ENCODE measurements at regions of chrX and their contacts with region 1.

Region 1: DNA sequence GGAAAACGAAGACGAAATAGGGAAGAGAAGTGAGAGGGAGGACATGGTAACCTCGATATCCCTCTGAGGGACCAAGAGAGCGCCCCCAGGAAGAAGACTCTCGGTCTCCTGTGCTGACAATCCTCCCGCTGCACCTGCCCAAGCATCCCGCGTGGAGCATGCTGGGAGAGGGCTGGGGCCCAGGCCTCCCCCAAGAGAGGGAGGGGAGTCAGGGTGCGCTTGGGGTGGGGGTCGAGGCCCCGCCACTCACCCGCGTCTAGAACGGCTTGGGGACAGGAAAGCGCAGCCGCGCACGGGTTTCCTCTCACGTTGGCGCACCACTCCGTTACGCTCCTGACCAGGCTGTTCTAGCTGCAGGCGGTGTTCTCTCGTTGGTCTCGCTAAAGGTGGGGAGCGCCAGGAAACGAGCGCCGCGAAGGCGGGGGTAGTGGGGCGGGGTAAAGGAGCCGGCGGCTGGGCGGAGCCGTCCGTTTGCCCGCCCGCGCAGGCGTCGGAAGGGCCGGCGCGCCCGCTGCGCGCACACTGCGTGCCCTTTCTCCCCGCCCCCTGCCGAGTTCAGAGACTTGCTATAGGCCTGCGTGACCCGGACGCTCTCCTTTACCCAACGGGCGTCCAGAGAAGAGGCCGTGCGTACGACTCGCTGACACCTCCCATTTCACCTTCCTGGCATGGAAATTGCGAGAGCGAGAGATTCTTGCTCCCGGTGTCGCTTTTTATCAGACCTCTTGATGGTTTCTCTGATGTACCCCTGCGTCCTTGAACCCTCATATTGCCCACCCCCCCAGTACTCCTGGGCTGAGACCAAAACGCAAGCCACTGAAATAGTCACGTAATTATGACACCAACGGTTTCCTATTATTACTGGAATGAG is at the start of gene C1GALT1C1:
- DNase-seq: peak; percentile 95
- ATAC-seq: peak; percentile 95
- H3K4me3 Mint-ChIP-seq: peak within 1 kb of the TSS; percentile 91
- H3K27ac Mint-ChIP-seq: peak within 1 kb of the TSS; percentile 99
- H3K4me1 Mint-ChIP-seq: peaks cover 20% of the 10 kb centered on the region
- H3K27me3 Mint-ChIP-seq: no peaks in the 10 kb centered on the region
- total RNA-seq, gene C1GALT1C1: 15.1 to 18.2 TPM

Region 2: GRCh38 chrX:120603707-120604360 is 26.1 kb before region 1 on chrX and contains the start of gene MCTS1:
- CTCF ChIA-PET with region 1: no interaction called
- POLR2A ChIA-PET with region 1: interaction called, 3 read pairs
- intact Hi-C with region 1: loop called (anchors 1 kb)
- DNase-seq: peak; percentile 87
- ATAC-seq: peak; percentile 98
- H3K4me3 Mint-ChIP-seq: peak within 1 kb of the TSS; percentile 96
- H3K27ac Mint-ChIP-seq: peak within 1 kb of the TSS; percentile 97
- H3K4me1 Mint-ChIP-seq: peaks cover 5% of the 10 kb centered on the region
- H3K27me3 Mint-ChIP-seq: no peaks in the 10 kb centered on the region
- total RNA-seq, gene MCTS1: 47.8 to 73.3 TPM

Measured in activated CD4-positive, alpha-beta T cell treated with anti-CD3 and anti-CD28 coated beads for 36 hours (primary cell).